OCI-LY7 (cell line): ENCODE measurements at regions of chr6 and their contacts with region 1.

Region 1: DNA sequence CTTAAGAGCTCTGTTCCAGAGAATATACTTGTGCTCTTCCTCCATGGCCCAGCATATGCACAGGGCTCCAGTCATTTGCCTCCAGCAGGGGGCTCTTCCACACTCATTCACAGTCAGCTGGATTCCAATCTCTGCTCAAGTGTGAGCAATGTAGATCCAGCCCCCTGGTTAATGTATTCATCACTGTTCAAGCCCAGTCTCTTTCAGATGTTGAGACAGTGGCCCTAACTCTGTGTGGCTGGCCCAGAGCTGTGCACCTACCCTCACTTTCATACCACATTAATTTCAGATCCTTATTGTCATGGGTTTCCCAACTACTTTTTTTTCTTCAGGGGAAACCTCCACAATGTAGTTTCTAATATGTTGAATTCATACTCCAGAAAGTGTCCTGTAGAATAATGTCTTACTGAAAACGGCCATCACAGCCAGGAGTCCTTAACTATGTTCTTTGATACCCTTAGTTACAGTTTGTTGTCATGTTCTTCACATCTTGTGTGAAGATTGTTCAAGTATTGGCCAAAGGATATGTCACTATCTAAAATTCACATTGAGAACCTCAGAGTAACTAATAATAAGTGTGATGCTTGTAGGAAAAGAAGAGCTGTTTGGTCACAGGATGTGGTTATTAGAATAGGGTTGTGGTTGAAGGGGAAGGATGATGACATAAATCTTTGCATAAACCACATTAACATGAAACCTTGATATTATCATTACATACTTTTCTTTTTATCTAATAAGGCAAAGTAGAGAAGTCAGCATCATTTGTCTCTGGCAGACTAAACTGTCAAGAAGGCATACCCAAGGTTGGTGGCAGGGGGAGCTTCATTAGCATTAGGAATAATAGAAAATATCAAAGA is 14.4 kb upstream of the HLA-DQA1 start:
- DNase-seq: peak; percentile 85
- H3K4me3 ChIP-seq: peak overlapping the region; percentile 49
- H3K27ac ChIP-seq: peak overlapping the region; percentile 91
- H3K4me1 ChIP-seq: peaks cover 69% of the 10 kb centered on the region
- CTCF ChIP-seq: peak; percentile 83

Region 2: DNA sequence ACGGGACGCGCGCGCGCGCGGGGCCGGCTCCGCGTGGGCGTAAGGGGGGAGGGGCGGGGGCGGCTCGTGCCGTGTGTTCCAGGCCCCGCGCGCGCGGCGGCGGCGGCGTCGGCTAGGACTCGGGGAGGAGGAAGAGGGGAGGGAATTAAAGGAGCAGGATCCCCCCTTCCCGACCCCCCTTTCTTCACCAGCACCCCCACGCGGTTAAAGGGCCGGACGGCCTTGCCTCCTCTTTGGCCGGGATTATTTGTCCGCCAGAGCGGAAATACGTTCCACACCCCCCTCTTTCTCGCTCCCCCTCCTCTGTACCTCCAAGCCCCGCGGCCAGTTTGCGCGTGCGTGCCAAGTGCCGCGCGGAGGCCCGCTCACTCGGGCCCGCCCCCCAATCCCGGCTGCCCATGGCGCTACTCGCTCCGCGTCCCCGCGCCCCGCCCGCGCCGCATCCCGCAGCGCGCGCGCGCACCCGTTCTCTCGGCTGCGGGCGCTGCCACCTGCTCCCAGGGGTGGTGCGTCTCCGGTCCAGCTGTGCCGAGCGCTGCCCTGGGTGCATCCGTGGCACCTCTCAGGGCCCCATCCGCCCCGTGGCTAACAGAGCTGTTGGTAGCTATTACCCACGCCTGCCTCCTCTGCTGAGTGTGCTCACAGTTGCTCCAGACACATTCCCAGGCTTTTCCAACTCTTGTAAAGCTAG is 720.7 kb before region 1 on chr6 and contains the start of gene ZBTB12:
- CTCF ChIA-PET with region 1: no interaction called
- POLR2A ChIA-PET with region 1: no interaction called
- intact Hi-C with region 1: no loop called
- DNase-seq: peak; percentile 95
- H3K4me3 ChIP-seq: peak within 1 kb of the TSS; percentile 75
- H3K27ac ChIP-seq: peak within 1 kb of the TSS; percentile 11
- H3K4me1 ChIP-seq: peaks cover 30% of the 10 kb centered on the region
- CTCF ChIP-seq: no peak
- total RNA-seq, gene ZBTB12: 12.8 and 17.6 TPM in 2 replicates

Region 3: DNA sequence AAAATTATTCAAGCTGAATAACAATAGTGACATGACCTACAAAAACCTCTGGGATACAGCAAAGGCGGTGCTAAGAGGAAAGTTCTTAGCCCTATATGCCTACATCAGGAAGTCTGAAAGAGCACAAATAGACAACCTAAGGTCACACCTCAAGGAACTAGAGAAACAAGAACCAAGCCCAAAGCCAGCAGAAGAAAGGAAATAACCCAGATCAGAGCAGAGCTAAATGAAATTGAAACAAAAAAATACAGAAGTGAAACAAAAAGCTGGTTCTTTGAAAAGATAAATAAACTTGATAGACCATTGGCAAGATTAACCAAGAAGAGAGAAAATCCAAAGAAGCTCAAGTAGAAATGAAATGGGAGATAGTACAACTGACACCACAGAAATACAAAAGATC is 351.3 kb before region 1 on chr6:
- CTCF ChIA-PET with region 1: no interaction called
- POLR2A ChIA-PET with region 1: interaction called, 3 read pairs
- intact Hi-C with region 1: loop called (anchors 1 kb)
- DNase-seq: peak; percentile 94
- H3K4me3 ChIP-seq: peak overlapping the region; percentile 54
- H3K27ac ChIP-seq: peak overlapping the region; percentile 95
- H3K4me1 ChIP-seq: peaks cover 71% of the 10 kb centered on the region
- CTCF ChIP-seq: no peak

Region 4: DNA sequence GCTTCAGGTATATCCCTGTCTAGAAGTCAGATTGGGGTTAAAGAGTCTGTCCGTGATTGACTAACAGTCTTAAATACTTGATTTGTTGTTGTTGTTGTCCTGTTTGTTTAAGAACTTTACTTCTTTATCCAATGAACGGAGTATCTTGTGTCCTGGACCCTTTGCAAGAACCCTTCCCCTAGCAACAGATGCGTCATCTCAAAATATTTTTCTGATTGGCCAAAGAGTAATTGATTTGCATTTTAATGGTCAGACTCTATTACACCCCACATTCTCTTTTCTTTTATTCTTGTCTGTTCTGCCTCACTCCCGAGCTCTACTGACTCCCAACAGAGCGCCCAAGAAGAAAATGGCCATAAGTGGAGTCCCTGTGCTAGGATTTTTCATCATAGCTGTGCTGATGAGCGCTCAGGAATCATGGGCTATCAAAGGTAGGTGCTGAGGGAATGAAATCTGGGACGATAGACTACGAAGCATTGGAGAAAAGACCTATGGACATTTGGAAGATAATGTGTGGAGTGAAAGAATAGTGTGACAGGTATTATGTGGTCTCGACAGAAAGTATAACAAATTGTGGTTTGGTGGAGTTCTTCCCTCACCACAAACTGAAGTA is 183.1 kb before region 1 on chr6 and contains the start of gene HLA-DRA:
- CTCF ChIA-PET with region 1: interaction called, 3 read pairs
- POLR2A ChIA-PET with region 1: interaction called, 4 read pairs
- intact Hi-C with region 1: loop called (anchors 5 kb)
- DNase-seq: peak; percentile 89
- H3K4me3 ChIP-seq: peak within 1 kb of the TSS; percentile 91
- H3K27ac ChIP-seq: peak within 1 kb of the TSS; percentile 88
- H3K4me1 ChIP-seq: peaks cover 63% of the 10 kb centered on the region
- CTCF ChIP-seq: no peak
- total RNA-seq, gene HLA-DRA: 1,088 and 1,231 TPM in 2 replicates

Region 5: DNA sequence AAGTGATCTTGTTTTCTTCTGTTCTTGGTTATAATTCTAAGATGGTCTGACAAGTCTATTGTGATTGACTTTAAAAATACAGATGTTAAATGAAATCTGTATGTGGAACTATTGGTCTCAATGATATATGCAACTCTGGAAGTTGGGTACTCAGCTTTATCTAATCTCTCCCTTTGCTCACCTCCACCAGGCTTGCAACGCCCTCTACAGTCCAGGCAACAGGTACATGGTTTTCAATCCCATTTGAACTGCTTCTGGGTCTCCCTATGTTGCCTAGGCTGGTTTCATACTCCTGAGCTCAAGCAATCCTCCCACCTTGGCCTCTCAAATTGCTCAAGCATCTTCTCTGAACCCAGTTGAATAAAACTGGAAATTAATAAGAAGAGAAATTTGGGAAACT is 69.2 kb after region 1 on chr6:
- CTCF ChIA-PET with region 1: interaction called, 5 read pairs
- POLR2A ChIA-PET with region 1: interaction called, 3 read pairs
- intact Hi-C with region 1: loop called (anchors 1 kb)
- DNase-seq: peak; percentile 83
- H3K4me3 ChIP-seq: no peak overlapping the region
- H3K27ac ChIP-seq: peak overlapping the region; percentile 23
- H3K4me1 ChIP-seq: peaks cover 28% of the 10 kb centered on the region
- CTCF ChIP-seq: peak; percentile 89